ENCODE measurements at regions of chr13 and their contacts with region 1.

Region 1: DNA sequence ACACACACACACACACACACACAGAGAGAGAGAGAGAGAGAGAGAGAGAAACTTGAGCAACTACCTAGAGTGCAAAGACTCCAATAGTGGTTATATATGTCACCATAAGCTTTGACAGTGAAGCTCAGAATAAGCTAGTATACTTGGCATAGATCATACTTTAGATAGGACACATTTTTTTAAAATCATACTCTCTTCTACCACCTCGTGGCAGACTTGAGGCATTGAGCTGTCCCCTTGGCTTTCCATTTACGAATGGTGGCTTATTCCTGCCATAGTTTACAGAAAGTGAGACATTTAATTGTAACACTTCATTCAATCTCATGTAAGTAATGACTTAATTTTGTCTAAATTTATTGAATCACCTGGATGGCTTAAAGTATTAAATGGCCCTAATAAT is 108.2 kb downstream of the EDNRB start:
- DNase-seq: no peak
- H3K4me3 ChIP-seq: no peak overlapping the region
- H3K4me3 Mint-ChIP-seq: no peak overlapping the region
- H3K27ac Mint-ChIP-seq: no peak overlapping the region
- H3K4me1 ChIP-seq: peaks cover 10% of the 10 kb centered on the region
- H3K4me1 Mint-ChIP-seq: no peaks in the 10 kb centered on the region
- H3K27me3 ChIP-seq: no peaks in the 10 kb centered on the region
- H3K27me3 Mint-ChIP-seq: peaks cover 7% of the 10 kb centered on the region
- CTCF ChIP-seq: peak in 1 of 2 experiments; percentile 4

Region 2: GRCh38 chr13:77779552-77780272 is 30.7 kb before region 1 on chr13:
- CTCF ChIA-PET with region 1: no interaction called
- POLR2A ChIA-PET with region 1: no interaction called
- intact Hi-C with region 1: loop called (anchors 2 kb)
- DNase-seq: peak in 1 of 2 experiments; percentile 44
- H3K4me3 ChIP-seq: no peak overlapping the region
- H3K4me3 Mint-ChIP-seq: no peak overlapping the region
- H3K27ac Mint-ChIP-seq: no peak overlapping the region
- H3K4me1 ChIP-seq: no peaks in the 10 kb centered on the region
- H3K4me1 Mint-ChIP-seq: peaks cover 12% of the 10 kb centered on the region
- H3K27me3 ChIP-seq: no peaks in the 10 kb centered on the region; the same call in 1 of the 2 replicates
- H3K27me3 Mint-ChIP-seq: peaks cover 6% of the 10 kb centered on the region
- CTCF ChIP-seq: peak; percentile 64 to 74

Region 3: GRCh38 chr13:78121459-78122348 is 311.3 kb after region 1 on chr13:
- CTCF ChIA-PET with region 1: no interaction called
- POLR2A ChIA-PET with region 1: no interaction called
- intact Hi-C with region 1: loop called (anchors 1 kb)
- DNase-seq: peak; percentile 42 to 55
- H3K4me3 ChIP-seq: no peak overlapping the region
- H3K4me3 Mint-ChIP-seq: no peak overlapping the region
- H3K27ac Mint-ChIP-seq: no peak overlapping the region
- H3K4me1 ChIP-seq: no peaks in the 10 kb centered on the region
- H3K4me1 Mint-ChIP-seq: no peaks in the 10 kb centered on the region
- H3K27me3 ChIP-seq: no peaks in the 10 kb centered on the region
- H3K27me3 Mint-ChIP-seq: peaks cover 15% of the 10 kb centered on the region
- CTCF ChIP-seq: peak; percentile 83 to 87

Region 4: DNA sequence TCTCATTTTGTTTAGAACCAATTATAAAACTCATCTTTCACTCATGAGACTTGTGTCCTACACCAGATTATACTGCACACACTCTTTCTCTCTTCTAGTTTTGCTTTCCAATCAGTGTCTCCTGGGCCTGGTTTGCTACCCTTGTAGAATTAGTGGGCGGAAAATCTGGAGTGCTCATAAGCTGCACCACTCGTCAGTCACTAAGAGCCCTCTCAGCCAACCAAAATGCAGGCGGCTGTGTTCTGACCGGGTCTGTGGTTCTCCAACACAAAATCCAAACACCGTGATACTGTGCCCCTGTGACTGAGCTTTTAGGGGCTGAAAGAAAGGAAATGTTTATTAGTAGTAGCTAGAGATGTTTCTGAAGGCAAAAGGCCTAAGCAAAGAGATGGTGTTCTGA is 932.2 kb after region 1 on chr13:
- CTCF ChIA-PET with region 1: no interaction called
- POLR2A ChIA-PET with region 1: no interaction called
- intact Hi-C with region 1: loop called (anchors 5 kb)
- DNase-seq: no peak
- H3K4me3 ChIP-seq: no peak overlapping the region
- H3K4me3 Mint-ChIP-seq: no peak overlapping the region
- H3K27ac Mint-ChIP-seq: no peak overlapping the region
- H3K4me1 ChIP-seq: no peaks in the 10 kb centered on the region
- H3K4me1 Mint-ChIP-seq: no peaks in the 10 kb centered on the region
- H3K27me3 ChIP-seq: no peaks in the 10 kb centered on the region; the same call in 1 of the 2 replicates
- H3K27me3 Mint-ChIP-seq: peaks cover 2% of the 10 kb centered on the region
- CTCF ChIP-seq: no peak